Caco-2 (cell line): ENCODE measurements at regions of chr11 and their contacts with region 1.

Region 1: GRCh38 chr11:31340903-31341572 is 28.5 kb downstream of the DCDC1 start:
- DNase-seq: peak in 1 of 2 experiments; percentile 52
- H3K4me3 ChIP-seq: no peak overlapping the region
- H3K4me3 Mint-ChIP-seq: no peak overlapping the region
- H3K27ac Mint-ChIP-seq: no peak overlapping the region
- H3K4me1 ChIP-seq: no peaks in the 10 kb centered on the region
- H3K4me1 Mint-ChIP-seq: no peaks in the 10 kb centered on the region
- H3K27me3 ChIP-seq: no peaks in the 10 kb centered on the region; the same call in 1 of the 2 replicates
- H3K27me3 Mint-ChIP-seq: peaks cover 6% of the 10 kb centered on the region
- CTCF ChIP-seq: peak; percentile 45 to 57

Region 2: GRCh38 chr11:31369348-31370329 is 28.6 kb after region 1 on chr11 and contains the starts of genes DCDC1 and DNAJC24:
- CTCF ChIA-PET with region 1: no interaction called
- POLR2A ChIA-PET with region 1: no interaction called
- intact Hi-C with region 1: loop called (anchors 2 kb)
- DNase-seq: peak; percentile 91 to 92
- H3K4me3 ChIP-seq: peak within 1 kb of the TSS; percentile 79
- H3K4me3 Mint-ChIP-seq: peak within 1 kb of the TSS; percentile 91
- H3K27ac Mint-ChIP-seq: peak within 1 kb of the TSS; percentile 90
- H3K4me1 ChIP-seq: no peaks in the 10 kb centered on the region
- H3K4me1 Mint-ChIP-seq: no peaks in the 10 kb centered on the region
- H3K27me3 ChIP-seq: no peaks in the 10 kb centered on the region
- H3K27me3 Mint-ChIP-seq: peaks cover 8% of the 10 kb centered on the region
- CTCF ChIP-seq: no peak
- total RNA-seq, gene DCDC1: 0.19 TPM in 1 of 2 replicates, not detected in the other
- total RNA-seq, gene DNAJC24: 13.4 and 14.8 TPM in 2 replicates

Region 3: DNA sequence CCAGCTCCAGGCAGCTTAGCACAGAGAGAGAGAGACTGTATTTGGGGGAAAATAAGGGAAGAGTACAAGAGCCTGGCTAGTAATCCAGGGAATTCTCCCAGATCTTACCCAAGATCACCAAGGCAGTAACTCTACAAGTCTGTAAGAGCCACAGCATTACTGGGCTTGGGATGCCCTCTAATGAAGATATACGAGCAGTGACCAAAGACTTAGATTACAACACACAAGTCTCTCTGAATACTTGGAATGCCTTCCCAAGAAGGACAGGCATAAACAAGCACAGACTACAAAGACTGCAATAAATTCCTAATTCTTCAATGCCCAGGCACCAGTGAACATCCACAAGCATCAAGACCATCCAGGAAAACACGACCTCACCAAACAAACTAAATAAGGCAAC is 46.3 kb after region 1 on chr11:
- CTCF ChIA-PET with region 1: no interaction called
- POLR2A ChIA-PET with region 1: no interaction called
- intact Hi-C with region 1: loop called (anchors 1 kb)
- DNase-seq: peak; percentile 41 to 60
- H3K4me3 ChIP-seq: no peak overlapping the region
- H3K4me3 Mint-ChIP-seq: no peak overlapping the region
- H3K27ac Mint-ChIP-seq: peak overlapping the region; percentile 63
- H3K4me1 ChIP-seq: peaks cover 11% of the 10 kb centered on the region
- H3K4me1 Mint-ChIP-seq: peaks cover 21% of the 10 kb centered on the region
- H3K27me3 ChIP-seq: no peaks in the 10 kb centered on the region
- H3K27me3 Mint-ChIP-seq: no peaks in the 10 kb centered on the region
- CTCF ChIP-seq: no peak